Sigmoid colon (tissue), 7 donors: ENCODE measurements at regions of chr17 and their contacts with region 1.

Region 1: GRCh38 chr17:57955183-57955931 is at the start of gene CUEDC1:
- DNase-seq: peak; percentile 93
- H3K4me3 ChIP-seq: peak within 1 kb of the TSS; percentile 70 to 96 (median 88)
- H3K27ac ChIP-seq: peak within 1 kb of the TSS; percentile 97 to 100 (median 99)
- H3K4me1 ChIP-seq: peaks cover 0 to 54% (median 50%) of the 10 kb centered on the region in 4 donors
- H3K27me3 ChIP-seq: no peaks in the 10 kb centered on the region
- CTCF ChIP-seq: peak in 1 of 4 experiments; percentile 54
- EP300 ChIP-seq: no peak
- POLR2A ChIP-seq: no peak
- total RNA-seq, gene CUEDC1: 29.5 to 64.0 (median 33.7) TPM

Region 2: DNA sequence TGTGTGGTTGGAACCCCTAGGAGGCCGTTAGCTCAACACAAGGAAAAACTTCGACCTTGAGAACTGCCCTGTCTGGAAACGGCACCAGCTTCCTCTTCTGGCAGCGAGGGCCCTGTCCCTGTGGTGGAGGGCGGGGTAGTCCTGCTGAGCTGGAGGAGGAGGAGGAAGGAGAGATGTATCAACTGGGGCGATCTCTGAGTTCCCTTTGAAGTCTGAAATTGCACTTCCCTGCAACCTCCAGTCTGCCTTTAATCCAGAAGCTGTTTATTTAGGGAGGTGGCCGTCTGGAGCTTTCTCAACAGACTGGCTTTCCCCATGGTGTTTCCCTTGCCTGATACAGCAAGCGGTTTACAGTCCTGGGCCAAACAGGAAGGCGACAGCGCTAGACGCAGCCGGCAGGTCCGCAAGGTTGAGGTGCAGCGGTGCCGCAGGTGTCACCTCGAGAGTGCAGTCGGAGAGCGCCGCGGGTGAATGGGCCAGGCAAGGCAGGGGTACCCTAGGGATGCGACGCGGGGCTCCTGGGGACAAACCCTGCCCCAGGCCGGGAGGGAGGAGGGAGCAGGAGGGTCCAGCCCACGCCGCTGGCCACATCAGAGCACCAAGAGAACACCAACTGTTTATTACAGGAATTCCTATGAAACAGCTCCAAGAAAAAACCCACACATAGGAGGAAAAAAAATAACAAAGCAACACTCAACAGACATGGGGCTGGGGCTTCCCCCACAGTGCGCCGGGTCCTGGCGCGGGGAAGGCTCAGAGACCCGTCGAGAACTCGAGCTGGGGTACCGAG is 94.2 kb before region 1 on chr17:
- intact Hi-C with region 1: loop called (anchors 2 kb)
- DNase-seq: peak; percentile 85
- H3K4me3 ChIP-seq: peak overlapping the region; percentile 38 to 55 (median 50)
- H3K27ac ChIP-seq: peak overlapping the region; percentile 92 to 97 (median 94)
- H3K4me1 ChIP-seq: peaks cover 0 to 66% (median 56%) of the 10 kb centered on the region in 4 donors
- H3K27me3 ChIP-seq: no peaks in the 10 kb centered on the region
- CTCF ChIP-seq: no peak
- EP300 ChIP-seq: peak in 1 of 4 donors; percentile 16
- POLR2A ChIP-seq: no peak

Region 3: DNA sequence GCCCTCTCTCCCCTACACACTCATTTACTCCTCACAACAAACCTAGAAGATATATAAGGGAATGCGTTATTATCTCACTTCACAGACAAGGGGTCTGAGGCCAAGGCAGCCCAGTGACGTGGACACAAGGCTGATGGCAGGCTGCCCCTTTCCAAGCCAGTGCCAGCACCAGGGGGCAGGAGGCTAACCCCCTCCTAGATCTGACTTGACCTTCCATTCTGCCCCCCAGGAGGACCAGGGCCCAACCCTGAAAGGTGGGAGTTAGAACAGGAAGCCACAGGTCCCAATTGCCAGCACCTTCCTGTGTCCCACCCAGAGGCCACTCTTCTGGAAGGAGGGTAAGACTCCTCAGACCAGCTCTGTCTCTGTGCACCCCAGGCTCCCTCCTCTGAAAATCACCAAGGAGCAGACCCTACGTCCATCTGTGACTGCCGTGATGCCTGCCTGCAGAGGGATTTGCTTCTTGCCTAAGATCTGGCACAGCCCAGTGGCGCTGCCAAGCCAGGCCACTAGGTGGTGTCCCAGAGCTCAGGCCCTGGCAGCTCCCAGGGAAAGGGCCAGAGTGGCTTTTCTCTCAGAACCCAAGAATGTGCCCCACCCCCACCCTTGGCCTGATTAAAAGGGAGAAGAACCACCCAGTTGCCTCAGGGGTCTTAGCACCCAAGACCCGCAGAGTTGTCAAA is 63.1 kb before region 1 on chr17:
- intact Hi-C with region 1: loop called (anchors 2 kb)
- DNase-seq: peak; percentile 95
- H3K4me3 ChIP-seq: no peak overlapping the region
- H3K27ac ChIP-seq: peak overlapping the region; percentile 97 to 100 (median 98)
- H3K4me1 ChIP-seq: peaks cover 0 to 98% (median 91%) of the 10 kb centered on the region in 4 donors
- H3K27me3 ChIP-seq: no peaks in the 10 kb centered on the region
- CTCF ChIP-seq: peak; percentile 98 to 99 (median 98)
- EP300 ChIP-seq: no peak
- POLR2A ChIP-seq: no peak

Region 4: DNA sequence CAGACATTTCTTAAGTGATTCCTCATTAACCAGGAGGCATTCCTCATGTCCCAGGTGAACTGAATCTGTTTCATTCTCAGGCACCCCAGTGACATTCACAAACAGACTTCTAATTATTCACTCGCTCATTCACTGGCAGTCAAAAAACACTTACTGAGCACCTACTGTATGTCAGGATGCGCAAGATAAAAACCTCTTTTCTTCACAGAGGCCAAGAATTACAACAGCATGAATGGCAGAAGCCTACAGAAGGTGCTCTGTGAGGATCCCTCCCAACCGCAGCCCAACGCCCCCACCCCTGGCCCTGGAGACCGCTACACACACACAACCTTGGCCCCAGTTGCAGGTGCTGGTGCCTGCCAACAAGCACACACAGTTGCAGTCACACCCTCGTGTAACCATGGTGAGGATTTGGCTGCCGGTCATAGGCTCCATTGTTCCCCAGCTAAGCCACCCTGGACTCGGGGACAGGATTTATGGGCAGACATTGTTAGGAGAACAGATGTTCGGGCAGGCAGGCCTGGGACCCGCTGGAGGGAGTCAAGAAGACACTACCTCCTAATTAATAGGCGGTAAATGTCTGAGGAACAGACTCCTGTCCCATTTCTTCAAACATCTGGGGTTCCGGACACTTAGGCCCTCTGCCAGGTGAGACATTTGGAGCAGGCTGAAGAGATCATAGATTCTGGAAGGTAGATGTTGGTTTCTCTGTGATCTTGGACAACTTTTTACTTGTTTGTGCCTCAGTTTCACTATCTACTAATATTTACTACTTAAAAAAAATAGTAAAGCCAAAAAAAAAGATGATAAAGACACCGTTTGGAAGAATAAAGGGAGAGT is 43.3 kb before region 1 on chr17:
- intact Hi-C with region 1: loop called (anchors 5 kb)
- DNase-seq: peak; percentile 97
- H3K4me3 ChIP-seq: no peak overlapping the region
- H3K27ac ChIP-seq: peak overlapping the region; percentile 97 to 100 (median 99)
- H3K4me1 ChIP-seq: peaks cover 0 to 90% (median 81%) of the 10 kb centered on the region in 4 donors
- H3K27me3 ChIP-seq: no peaks in the 10 kb centered on the region
- CTCF ChIP-seq: no peak
- EP300 ChIP-seq: no peak
- POLR2A ChIP-seq: no peak

Region 5: DNA sequence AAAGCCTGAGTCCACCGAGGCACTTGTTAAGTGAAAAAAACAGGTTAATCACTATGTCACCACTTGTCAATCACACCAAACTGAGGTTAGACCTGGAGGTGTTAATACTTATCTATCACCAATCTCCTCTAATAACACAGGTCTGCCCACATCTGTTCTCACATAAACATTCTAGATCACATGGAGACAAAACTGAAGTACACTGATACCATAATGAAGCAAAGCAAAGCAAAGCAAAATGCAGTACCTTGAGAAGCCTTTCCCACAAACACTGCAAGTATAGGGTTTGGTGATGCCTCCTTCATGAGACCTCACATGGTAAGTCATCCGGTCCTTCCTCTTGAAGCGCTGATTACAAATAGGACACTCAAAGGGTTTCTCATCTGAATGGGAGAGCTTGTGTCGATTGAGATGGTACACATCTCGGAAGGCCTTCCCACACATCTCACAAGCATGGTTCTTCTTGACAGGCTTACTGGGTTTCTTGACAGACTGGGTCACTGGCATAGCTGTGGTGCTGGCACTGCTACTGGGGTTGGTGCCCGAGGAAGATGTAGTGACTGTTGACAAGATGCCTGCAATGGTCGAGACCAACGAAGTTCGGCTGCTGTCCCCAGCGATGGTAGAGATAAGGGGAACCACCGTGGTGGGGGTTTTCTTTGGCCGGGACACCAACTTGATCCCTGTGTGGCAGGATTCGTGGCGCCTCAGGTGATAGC is 27.3 kb after region 1 on chr17:
- intact Hi-C with region 1: loop called (anchors 2 kb)
- DNase-seq: no peak
- H3K4me3 ChIP-seq: peak overlapping the region in 1 of 4 donors; percentile 5
- H3K27ac ChIP-seq: peak overlapping the region; percentile 95 to 99 (median 97)
- H3K4me1 ChIP-seq: peaks cover 0 to 79% (median 70%) of the 10 kb centered on the region in 4 donors
- H3K27me3 ChIP-seq: no peaks in the 10 kb centered on the region
- CTCF ChIP-seq: no peak
- EP300 ChIP-seq: no peak
- POLR2A ChIP-seq: no peak